ENCODE measurements at regions of chr6 and their contacts with region 1.

Region 1: DNA sequence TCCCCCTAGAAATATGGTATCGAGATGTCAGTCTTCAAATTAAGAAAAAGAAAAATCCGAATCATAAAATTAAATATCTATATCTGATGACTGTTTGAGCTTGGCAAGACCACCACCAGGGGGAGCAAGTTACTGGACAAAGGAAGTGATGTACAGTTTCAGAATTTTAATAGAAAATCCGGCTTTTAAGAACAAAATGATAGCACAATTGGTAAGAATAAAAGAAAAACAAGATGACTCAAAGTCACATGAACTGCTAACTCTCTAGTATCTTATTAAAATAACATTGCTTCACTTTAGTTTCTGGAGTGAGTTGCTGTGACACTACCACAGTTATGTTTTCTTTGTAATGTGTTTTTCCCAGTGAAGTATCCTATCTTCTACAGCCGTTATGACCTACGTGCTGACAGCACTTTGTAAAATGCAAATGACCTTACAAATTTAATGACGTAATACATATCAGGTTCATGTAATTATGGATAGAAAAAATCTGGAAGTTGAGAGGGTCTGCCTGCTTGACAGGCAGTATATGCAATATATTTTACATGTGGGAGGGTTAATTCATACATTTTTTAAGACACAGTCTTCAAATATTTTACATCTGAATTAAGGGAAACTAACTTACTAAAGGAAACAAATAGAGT is 405.3 kb upstream of the HS3ST5 start:
- DNase-seq: no peak
- ATAC-seq: no peak

Region 2: GRCh38 chr6:115544765-115545673 is 796.9 kb after region 1 on chr6:
- intact Hi-C with region 1: loop called (anchors 5 kb)
- DNase-seq: peak; percentile 40
- ATAC-seq: peak; percentile 91

Region 3: DNA sequence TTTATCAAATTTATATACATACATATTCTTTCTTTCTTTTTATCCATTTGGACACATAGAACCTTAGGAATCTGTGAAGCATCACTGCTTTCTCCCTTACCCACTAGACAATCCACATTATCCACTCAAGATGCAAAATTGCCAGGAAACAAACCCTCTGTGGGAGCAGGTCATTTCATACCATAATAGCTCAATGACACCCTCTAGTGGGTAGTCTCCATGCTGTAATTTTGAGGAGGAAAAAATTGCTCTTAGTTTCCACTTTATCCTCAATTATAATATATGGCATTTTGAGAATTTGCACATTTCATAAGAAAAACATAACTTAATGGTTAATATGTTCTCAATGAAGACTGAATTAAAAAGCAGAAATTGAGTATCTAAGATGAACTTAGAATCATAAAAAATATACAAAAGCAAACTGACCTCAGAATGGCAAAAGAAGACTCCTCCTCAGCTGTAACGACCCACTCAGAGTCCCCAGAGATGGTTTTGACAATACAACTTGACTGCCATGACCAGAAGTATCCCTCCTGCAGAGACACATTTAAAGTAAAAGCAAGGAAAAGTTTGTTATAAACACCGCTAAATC is 1148.5 kb after region 1 on chr6:
- intact Hi-C with region 1: loop called (anchors 5 kb)
- DNase-seq: no peak
- ATAC-seq: no peak